ENCODE measurements at regions of chrX and their contacts with region 1.

Region 1: GRCh38 chrX:71103110-71103983 is 3.2 kb downstream of the CXorf65 start:
- DNase-seq: peak in 12 of 14 experiments; percentile 27 to 77 (median 56)
- ATAC-seq: peak; percentile 60
- H3K4me3 ChIP-seq: peak overlapping the region; percentile 35
- H3K4me3 Mint-ChIP-seq: peak overlapping the region; percentile 74
- H3K27ac ChIP-seq: peak overlapping the region; percentile 72 to 76
- H3K27ac Mint-ChIP-seq: peak overlapping the region; percentile 93
- H3K4me1 ChIP-seq: peaks cover 90% of the 10 kb centered on the region
- H3K4me1 Mint-ChIP-seq: peaks cover 87% of the 10 kb centered on the region
- H3K27me3 ChIP-seq: no peaks in the 10 kb centered on the region
- H3K27me3 Mint-ChIP-seq: no peaks in the 10 kb centered on the region
- CTCF ChIP-seq: no peak

Region 2: GRCh38 chrX:71118032-71118984 is 15.0 kb after region 1 on chrX and contains the start of gene MED12:
- CTCF ChIA-PET with region 1: interaction called, 4 read pairs
- POLR2A ChIA-PET with region 1: interaction called, 106 read pairs
- intact Hi-C with region 1: no loop called
- DNase-seq: peak; percentile 63 to 89 (median 76)
- ATAC-seq: peak; percentile 95
- H3K4me3 ChIP-seq: peak within 1 kb of the TSS; percentile 83
- H3K4me3 Mint-ChIP-seq: peak within 1 kb of the TSS; percentile 93
- H3K27ac ChIP-seq: peak within 1 kb of the TSS; percentile 77 to 86
- H3K27ac Mint-ChIP-seq: peak within 1 kb of the TSS; percentile 94
- H3K4me1 ChIP-seq: peaks cover 40% of the 10 kb centered on the region
- H3K4me1 Mint-ChIP-seq: peaks cover 36% of the 10 kb centered on the region
- H3K27me3 ChIP-seq: no peaks in the 10 kb centered on the region
- H3K27me3 Mint-ChIP-seq: no peaks in the 10 kb centered on the region
- CTCF ChIP-seq: no peak
- total RNA-seq, gene MED12: 44.5 to 55.3 TPM

Measured in CD4-positive, alpha-beta T cell (primary cell).